CD14-positive monocyte (primary cell): ENCODE measurements at regions of chrX and their contacts with region 1.

Region 1: DNA sequence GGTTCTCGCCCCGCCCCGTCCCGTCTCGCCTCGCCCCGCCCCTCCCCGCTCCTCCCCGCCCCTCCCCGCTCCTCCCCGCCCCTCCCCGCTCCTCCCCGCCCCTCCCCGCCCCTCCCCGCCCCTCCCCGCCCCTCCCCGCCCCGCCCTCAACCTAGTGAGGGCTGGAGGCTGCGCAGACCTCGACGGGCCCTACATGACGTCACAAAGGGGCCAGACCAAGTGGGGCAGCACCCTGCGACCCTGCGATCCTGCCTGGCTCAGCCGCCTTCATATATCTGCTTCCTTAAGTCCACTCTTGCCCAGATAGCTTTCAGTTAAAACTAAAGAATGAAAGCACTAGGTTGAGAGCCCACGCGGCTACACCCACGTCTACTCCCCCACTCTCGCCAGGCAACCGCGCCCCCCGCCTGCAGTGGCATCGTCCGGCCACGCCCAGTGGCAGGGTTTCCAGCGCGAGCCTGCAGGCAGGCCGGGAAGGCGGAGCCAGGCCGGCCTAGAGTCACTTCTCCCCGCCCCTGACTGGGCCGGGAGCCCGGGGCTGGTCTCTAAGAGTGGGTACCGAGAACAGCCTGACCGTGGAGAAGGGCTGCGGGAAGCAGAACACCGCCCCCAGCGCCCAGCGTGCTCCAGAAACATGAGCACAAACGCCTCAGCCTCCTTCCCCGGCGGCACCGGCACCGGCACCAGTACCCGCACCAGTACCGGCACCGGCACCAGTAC is 1.5 kb upstream of the MAOA start:
- DNase-seq: peak; percentile 87 to 91 (median 91)
- H3K4me3 ChIP-seq: peak overlapping the region; percentile 32 to 75 (median 65)
- H3K4me3 Mint-ChIP-seq: peak overlapping the region; percentile 84 to 93
- H3K27ac ChIP-seq: peak overlapping the region; percentile 55 to 88
- H3K27ac Mint-ChIP-seq: peak overlapping the region; percentile 96 to 100 (median 99)
- H3K4me1 ChIP-seq: peaks cover 10 to 12% of the 10 kb centered on the region in 2 donors
- H3K4me1 Mint-ChIP-seq: peaks cover 10% of the 10 kb centered on the region
- H3K27me3 ChIP-seq: no peaks in the 10 kb centered on the region
- H3K27me3 Mint-ChIP-seq: peaks cover 9 to 15% (median 11%) of the 10 kb centered on the region in 3 donors
- CTCF ChIP-seq: peak; percentile 13

Region 2: GRCh38 chrX:43728002-43728401 is 73.4 kb after region 1 on chrX:
- intact Hi-C with region 1: loop called in 1 of 2 experiments (anchors 10 kb)
- DNase-seq: no peak
- H3K4me3 ChIP-seq: no peak overlapping the region
- H3K4me3 Mint-ChIP-seq: no peak overlapping the region
- H3K27ac ChIP-seq: peak overlapping the region; percentile 29 to 73
- H3K27ac Mint-ChIP-seq: peak overlapping the region in 4 of 7 donors; percentile 53 to 92 (median 88)
- H3K4me1 ChIP-seq: peaks cover 38 to 46% of the 10 kb centered on the region in 2 donors
- H3K4me1 Mint-ChIP-seq: peaks cover 35% of the 10 kb centered on the region
- H3K27me3 ChIP-seq: no peaks in the 10 kb centered on the region
- H3K27me3 Mint-ChIP-seq: peaks cover 0 to 10% (median 0%) of the 10 kb centered on the region in 3 donors
- CTCF ChIP-seq: no peak

Region 3: DNA sequence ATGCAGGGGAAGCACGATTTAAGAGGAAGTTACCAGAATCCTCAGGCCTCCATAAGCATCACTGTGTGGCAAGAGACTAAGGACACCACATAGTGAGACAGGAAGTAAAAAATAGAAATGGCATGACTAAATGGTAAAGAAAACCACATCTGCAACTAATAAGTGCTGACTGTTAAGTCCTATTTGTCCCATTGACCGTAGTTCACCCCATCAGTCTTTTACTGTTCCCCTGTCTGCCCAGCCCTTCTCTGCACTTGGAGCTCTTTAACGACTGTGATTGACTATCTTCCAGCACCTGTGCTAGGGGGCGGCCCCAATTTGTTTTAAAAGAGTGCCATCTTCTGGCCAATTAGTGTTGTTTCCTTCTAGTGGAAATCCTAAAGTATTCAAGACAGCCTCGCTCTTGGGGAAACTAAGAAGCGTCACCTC is 95.7 kb after region 1 on chrX:
- intact Hi-C with region 1: loop called in 1 of 2 experiments (anchors 5 kb)
- DNase-seq: peak; percentile 72 to 85 (median 82)
- H3K4me3 ChIP-seq: peak overlapping the region in 1 of 3 experiments; percentile 6
- H3K4me3 Mint-ChIP-seq: no peak overlapping the region
- H3K27ac ChIP-seq: peak overlapping the region in 1 of 2 donors; percentile 60
- H3K27ac Mint-ChIP-seq: peak overlapping the region; percentile 62 to 87 (median 80)
- H3K4me1 ChIP-seq: peaks cover 17 to 21% of the 10 kb centered on the region in 2 donors
- H3K4me1 Mint-ChIP-seq: peaks cover 15% of the 10 kb centered on the region
- H3K27me3 ChIP-seq: peaks cover 0 to 4% of the 10 kb centered on the region in 2 donors
- H3K27me3 Mint-ChIP-seq: peaks cover 0 to 2% (median under 1%) of the 10 kb centered on the region in 3 donors
- CTCF ChIP-seq: peak; percentile 45